ENCODE measurements at regions of chr6 and their contacts with region 1.

Region 1: DNA sequence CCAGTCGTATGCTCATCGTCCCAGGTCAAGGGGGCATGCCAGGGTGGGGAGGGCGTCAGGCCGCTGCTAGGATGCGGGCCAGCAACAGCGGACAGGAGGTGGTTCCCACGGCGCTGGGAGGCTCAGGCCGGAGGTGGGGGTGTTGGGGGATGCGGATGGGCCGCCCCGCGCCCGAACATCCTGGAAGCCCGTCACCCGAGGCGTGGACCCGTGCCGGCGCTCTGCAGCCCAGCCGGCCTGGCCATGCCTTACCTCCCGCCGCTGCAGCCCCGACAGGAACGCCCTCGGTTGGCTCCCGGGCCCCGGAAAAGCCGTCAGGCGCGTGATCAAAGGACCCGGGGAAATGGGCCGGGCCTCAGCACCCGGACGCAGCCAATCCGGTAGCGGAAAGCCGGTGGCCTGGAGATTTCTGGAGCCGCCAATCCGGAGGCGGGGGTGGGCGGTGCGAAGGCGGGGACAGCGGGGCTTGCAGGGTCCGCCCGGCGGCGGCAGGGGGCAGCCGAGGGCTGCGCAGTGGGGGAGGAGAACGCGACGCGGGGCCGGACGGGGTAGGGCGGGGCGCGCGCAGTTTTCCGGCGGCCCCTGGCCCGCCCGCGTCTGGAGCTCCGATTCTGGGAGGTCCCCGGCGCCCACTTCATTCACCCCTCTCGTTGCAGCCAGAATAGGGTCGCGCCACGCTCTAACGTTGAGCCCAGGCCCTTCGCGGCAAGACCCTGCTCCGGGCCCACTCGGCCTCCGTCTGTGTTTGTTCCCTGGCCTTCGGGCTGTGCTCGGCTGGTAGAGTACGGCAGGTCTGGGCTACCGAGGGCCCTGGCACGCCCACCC is at the start of gene SMIM29:
- DNase-seq: peak; percentile 98
- ATAC-seq: peak; percentile 95
- total RNA-seq, gene SMIM29: 19.1 TPM

Region 2: DNA sequence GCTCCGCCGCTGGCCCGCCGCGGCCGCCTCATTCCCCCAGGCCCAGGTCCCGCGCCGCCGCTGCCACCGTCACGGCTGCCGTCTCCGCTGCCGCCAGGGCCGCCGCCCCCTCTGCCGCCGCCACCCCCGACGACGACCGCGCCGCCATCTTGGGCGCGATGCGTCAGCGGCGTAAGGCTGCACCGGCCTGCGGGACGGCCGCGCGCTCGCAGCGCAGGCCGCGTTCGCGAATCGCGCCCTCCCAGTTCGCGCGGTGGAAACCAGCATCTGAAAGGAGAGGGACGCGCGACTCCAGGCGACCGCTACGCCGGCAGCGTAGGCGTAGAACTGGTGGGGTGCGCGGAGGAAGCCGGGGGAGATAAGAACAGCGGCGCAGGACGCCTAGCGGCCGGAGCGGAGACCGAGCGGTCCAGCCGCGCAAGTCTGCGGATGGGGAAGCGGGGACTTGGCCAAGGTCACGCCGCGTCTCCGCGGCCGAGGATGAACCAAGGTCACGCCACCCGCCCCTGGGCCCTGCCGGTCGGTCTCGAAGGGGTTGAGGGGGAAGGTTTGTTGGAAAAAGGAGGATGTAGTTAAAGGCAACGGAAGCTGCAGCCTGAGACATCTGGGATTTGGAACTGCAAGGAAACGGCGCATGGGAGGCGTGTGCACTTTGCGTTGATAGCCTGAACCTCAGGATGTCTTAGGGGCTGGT is 143.7 kb after region 1 on chr6 and contains the start of gene NUDT3:
- intact Hi-C with region 1: loop called (anchors 2 kb)
- DNase-seq: peak; percentile 97
- ATAC-seq: peak; percentile 91
- total RNA-seq, gene NUDT3: 49.6 TPM

Region 3: GRCh38 chr6:34414999-34415858 is 166.3 kb after region 1 on chr6:
- intact Hi-C with region 1: loop called (anchors 2 kb)
- DNase-seq: no peak
- ATAC-seq: peak; percentile 93

Measured in Right ventricle myocardium superior (tissue), 1 donor.